Activated B cell treated with CpG ODN at 0.5 μM for 24 hours (primary cell): ENCODE measurements at regions of chr3 and their contacts with region 1.

Region 1: DNA sequence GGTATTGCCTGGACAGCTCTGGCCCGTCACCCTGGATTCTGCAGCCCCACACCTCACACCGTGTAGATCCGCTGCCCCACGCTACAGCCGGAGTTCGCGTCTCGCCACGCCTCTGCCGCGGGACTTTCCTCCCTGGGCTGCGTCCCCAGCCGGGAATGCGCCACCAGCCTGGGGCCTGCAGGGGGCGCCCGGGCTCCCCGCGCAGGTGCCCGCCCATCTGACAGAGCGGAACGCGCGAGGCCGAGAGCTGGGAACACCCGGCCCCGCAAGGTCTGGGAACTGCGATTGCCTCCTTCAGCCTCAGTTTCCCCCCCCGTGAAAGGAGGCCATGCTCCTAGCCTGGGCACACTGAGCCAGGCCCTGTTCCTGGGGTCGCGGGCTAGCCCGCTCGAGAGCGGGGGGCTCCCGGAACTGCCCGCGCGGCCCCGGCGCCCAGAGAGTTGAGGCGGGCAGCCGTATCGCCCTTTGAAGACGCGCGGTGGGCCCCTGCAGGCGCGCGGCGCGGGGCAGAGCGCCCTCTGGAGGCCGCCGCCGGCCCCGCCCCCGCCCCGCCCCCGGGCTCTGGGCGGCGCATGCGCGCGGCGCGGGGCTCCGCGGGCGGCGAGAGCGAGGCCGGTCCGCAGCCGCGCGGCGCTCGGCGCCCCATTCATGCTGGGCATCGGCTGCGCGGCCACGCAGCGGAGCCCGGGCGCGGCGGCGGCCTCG is at the start of gene PLXNA1:
- DNase-seq: peak; percentile 92
- ATAC-seq: peak; percentile 75
- H3K4me3 Mint-ChIP-seq: peak within 1 kb of the TSS; percentile 87
- H3K27ac Mint-ChIP-seq: peak within 1 kb of the TSS; percentile 97
- H3K4me1 Mint-ChIP-seq: peaks cover 29% of the 10 kb centered on the region
- H3K27me3 Mint-ChIP-seq: peaks cover 4% of the 10 kb centered on the region
- CTCF ChIP-seq: peak; percentile 43
- total RNA-seq, gene PLXNA1: 47.2 and 55.2 TPM in 2 replicates

Region 2: GRCh38 chr3:126475413-126476114 is 507.1 kb before region 1 on chr3 and contains the start of gene ZXDC:
- CTCF ChIA-PET with region 1: no interaction called
- POLR2A ChIA-PET with region 1: interaction called, 3 read pairs
- intact Hi-C with region 1: loop called (anchors 1 kb)
- DNase-seq: peak; percentile 92
- ATAC-seq: peak; percentile 86
- H3K4me3 Mint-ChIP-seq: peak within 1 kb of the TSS; percentile 87
- H3K27ac Mint-ChIP-seq: peak within 1 kb of the TSS; percentile 63
- H3K4me1 Mint-ChIP-seq: peaks cover 37% of the 10 kb centered on the region
- H3K27me3 Mint-ChIP-seq: no peaks in the 10 kb centered on the region
- CTCF ChIP-seq: no peak
- total RNA-seq, gene ZXDC: 37.4 and 45.4 TPM in 2 replicates

Region 3: GRCh38 chr3:126703512-126704462 is 278.8 kb before region 1 on chr3 and contains the start of gene CHCHD6:
- CTCF ChIA-PET with region 1: no interaction called
- POLR2A ChIA-PET with region 1: interaction called, 3 read pairs
- intact Hi-C with region 1: loop called (anchors 1 kb)
- DNase-seq: peak; percentile 94
- ATAC-seq: peak; percentile 96
- H3K4me3 Mint-ChIP-seq: peak within 1 kb of the TSS; percentile 99
- H3K27ac Mint-ChIP-seq: peak within 1 kb of the TSS; percentile 74
- H3K4me1 Mint-ChIP-seq: peaks cover 17% of the 10 kb centered on the region
- H3K27me3 Mint-ChIP-seq: peaks cover 32% of the 10 kb centered on the region
- CTCF ChIP-seq: no peak
- total RNA-seq, gene CHCHD6: 7.5 and 10.0 TPM in 2 replicates

Region 4: DNA sequence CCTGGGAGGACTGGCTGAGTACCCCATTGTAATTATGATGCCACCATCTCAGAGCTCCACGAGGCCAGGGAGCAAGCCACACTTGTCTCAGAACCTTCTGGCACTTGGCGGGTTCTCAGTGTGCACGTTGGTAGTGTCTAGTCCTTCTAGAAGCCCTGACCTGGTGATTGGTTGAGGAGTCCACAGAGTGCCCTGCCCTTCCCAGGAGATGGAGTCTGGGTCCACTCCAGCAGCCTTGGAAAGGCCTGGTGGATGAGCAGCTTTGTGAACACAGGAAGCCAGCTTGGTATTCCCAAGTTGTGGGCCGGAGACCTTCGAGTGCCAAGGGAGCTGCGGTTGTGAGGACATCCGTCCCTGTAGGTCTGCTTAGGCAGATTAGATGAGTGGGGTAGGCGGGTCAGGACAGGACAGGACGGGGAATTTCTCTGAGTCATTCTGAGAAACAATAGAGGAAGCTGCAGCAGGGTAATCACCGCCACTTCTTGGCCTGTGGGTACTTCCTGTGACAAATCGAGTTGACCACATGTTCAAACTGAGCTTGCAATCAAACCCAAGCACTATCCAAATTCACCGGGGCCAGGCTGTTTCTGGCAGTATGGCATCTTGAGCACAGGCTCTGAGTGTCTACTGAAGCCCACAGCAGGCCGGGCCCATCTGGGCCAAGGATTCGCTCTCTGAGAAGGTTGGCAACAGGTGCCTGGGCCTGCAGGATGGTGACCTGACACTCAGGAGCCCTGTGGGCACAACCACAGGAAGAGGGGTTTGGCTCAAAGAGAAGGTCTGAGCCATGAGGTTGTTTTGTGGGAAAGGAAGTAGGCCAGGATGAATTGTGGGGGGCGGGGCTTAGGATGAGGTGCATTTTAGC is 71.2 kb before region 1 on chr3:
- CTCF ChIA-PET with region 1: interaction called, 10 read pairs
- POLR2A ChIA-PET with region 1: interaction called, 44 read pairs
- intact Hi-C with region 1: loop called (anchors 1 kb)
- DNase-seq: peak; percentile 65
- ATAC-seq: peak; percentile 94
- H3K4me3 Mint-ChIP-seq: peak overlapping the region; percentile 75
- H3K27ac Mint-ChIP-seq: peak overlapping the region; percentile 95
- H3K4me1 Mint-ChIP-seq: peaks cover 44% of the 10 kb centered on the region
- H3K27me3 Mint-ChIP-seq: peaks cover 36% of the 10 kb centered on the region
- CTCF ChIP-seq: no peak

Region 5: DNA sequence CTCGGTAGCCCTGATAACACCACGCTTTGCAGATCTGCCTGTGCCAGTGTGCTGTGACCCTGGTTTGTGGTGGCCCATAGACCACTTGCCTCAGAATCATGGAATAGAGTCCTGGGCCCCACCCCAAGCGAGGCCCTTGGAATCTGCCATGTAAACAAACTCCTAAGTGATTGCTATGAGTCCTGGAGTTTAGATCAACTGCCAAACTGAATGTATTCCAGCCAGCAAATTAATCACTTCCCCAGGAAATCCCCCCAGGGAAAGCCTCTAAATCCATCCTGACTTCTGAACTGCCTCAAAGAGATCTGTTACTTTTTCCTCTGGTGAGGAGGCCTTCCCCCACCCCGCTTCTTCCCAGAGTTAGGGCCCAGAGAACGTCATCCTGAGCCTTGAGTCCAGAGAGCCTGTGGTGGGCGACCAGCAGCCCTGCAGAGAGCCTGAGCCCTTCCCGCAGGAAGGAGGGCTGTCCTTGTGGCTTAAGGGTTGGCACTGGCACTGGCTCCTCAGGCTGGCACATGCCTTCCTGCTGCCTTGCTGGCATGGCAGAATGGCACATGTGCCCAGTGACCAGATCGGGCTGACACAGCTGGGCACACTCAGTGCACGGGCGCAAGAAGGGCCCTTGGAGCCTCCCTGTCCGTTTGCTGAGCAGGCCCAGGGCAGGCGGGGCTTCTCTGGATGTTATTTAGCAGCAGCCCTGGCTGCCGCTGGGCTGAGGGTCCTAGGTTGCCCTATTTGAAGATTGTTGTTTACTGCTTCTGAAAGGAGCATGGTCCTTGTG is 50.2 kb before region 1 on chr3:
- CTCF ChIA-PET with region 1: no interaction called
- POLR2A ChIA-PET with region 1: no interaction called
- intact Hi-C with region 1: no loop called
- DNase-seq: no peak
- ATAC-seq: no peak
- H3K4me3 Mint-ChIP-seq: no peak overlapping the region
- H3K27ac Mint-ChIP-seq: no peak overlapping the region
- H3K4me1 Mint-ChIP-seq: no peaks in the 10 kb centered on the region
- H3K27me3 Mint-ChIP-seq: peaks cover 6% of the 10 kb centered on the region
- CTCF ChIP-seq: no peak

Region 6: DNA sequence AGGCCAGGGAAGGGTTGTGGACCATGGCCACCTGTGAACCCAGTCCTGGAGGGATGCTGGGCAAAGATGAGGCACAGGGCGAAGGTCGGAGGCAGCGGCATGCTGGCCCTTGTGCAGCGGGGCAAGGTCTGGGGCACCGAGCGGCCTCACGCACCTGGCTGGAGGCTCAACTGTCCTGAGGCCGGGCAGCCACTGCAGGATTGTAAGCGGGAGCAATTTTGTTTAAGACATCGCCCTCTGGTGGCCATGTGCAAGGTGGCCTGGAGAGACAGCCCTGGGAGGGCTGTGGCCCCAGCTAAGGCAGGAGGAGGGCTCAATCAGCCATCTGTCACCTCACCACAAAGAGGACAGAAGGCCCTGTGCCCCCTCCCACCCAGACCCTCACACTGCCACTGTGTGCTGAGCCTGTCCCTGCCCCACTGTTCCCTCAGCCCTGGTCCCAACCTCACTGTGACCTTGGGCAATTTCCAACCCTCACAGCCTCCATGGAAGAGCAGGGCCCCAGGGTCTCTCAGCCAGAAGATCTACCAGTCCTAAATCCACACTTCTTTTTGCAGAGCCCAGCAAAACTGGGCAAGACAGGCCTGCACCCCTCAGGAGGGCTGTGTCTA is 561.7 kb after region 1 on chr3:
- CTCF ChIA-PET with region 1: no interaction called
- POLR2A ChIA-PET with region 1: interaction called, 4 read pairs
- intact Hi-C with region 1: loop called (anchors 2 kb)
- DNase-seq: peak; percentile 51
- ATAC-seq: peak; percentile 46
- H3K4me3 Mint-ChIP-seq: no peak overlapping the region
- H3K27ac Mint-ChIP-seq: no peak overlapping the region
- H3K4me1 Mint-ChIP-seq: peaks cover 14% of the 10 kb centered on the region
- H3K27me3 Mint-ChIP-seq: peaks cover 3% of the 10 kb centered on the region
- CTCF ChIP-seq: no peak